Calu3 (cell line): ENCODE measurements at regions of chr12 and their contacts with region 1.

Region 1: GRCh38 chr12:98424726-98425401 is 90.5 kb upstream of the TMPO start:
- DNase-seq: peak; percentile 83
- H3K4me3 Mint-ChIP-seq: no peak overlapping the region
- H3K27ac Mint-ChIP-seq: no peak overlapping the region
- H3K4me1 Mint-ChIP-seq: peaks cover 24% of the 10 kb centered on the region
- H3K27me3 Mint-ChIP-seq: no peaks in the 10 kb centered on the region
- CTCF ChIP-seq: peak; percentile 59

Region 2: DNA sequence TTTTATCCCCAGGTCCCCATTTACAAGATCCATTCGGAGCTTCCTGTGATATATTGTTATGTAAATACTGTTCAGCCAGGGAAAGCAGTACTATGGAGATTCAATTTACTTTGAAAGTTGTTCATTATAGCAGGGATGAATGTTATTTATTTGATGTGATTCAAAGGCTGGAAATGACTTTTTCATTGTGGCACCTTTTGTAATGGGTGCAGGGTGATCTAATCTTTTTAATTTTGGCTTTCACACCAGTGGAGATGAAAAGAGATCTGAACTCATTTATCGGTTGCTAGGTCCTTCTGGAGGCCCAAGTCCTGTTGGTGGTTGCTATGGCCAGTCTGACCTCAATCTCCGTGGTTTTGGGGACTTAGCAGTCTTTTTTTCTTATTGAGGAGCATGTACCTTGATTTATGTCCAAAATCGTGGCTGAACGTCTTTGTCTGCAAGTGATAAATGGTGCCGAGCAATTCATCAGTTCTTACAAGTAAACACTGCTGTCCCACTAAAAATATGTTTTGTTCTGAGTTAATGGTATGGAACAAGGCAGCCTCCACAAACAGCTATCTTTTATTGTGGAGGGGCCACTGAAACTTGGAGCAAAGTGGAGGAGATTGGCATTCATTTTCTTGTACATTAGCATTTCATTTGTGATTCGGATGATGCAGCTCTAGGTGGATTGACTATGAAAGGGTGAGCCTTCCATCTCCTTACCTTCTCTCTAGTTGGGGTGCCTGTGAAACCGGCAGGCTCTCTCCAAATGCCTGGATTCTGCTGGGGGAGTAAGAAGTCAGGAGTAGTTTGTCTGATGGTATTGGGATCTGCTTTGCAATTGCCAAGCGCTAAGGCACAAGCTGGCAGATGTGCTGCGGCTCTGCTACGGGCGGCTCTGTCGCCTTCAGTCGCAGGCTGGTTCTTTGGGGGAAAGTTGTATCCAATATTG is 960.2 kb before region 1 on chr12:
- CTCF ChIA-PET with region 1: no interaction called
- intact Hi-C with region 1: no loop called
- DNase-seq: no peak
- H3K4me3 Mint-ChIP-seq: no peak overlapping the region
- H3K27ac Mint-ChIP-seq: no peak overlapping the region
- H3K4me1 Mint-ChIP-seq: peaks cover 13% of the 10 kb centered on the region
- H3K27me3 Mint-ChIP-seq: no peaks in the 10 kb centered on the region
- CTCF ChIP-seq: no peak

Region 3: DNA sequence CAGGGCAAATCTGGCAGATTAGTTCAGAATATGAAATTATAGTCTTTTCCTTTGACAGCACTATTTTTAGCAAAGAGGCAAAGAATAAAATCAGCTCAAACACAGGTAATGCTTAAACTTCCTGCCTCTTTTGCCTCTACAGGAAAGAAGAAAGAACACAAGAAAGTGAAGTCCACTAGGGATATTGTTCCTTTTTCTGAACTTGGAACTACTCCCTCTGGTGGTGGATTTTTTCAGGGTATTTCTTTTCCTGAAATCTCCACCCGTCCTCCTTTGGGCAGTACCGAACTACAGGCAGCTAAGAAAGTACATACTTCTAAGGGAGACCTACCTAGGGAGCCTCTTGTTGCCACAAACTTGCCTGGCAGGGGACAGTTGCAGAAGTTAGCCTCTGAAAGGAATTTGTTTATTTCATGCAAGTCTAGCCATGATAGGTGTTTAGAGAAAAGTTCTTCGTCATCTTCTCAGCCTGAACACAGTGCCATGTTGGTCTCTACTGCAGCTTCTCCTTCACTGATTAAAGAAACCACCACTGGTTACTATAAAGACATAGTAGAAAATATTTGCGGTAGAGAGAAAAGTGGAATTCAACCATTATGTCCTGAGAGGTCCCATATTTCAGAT is 107.9 kb after region 1 on chr12:
- CTCF ChIA-PET with region 1: interaction called, 3 read pairs
- intact Hi-C with region 1: loop called (anchors 1 kb)
- DNase-seq: peak; percentile 66
- H3K4me3 Mint-ChIP-seq: no peak overlapping the region
- H3K27ac Mint-ChIP-seq: no peak overlapping the region
- H3K4me1 Mint-ChIP-seq: peaks cover 5% of the 10 kb centered on the region
- H3K27me3 Mint-ChIP-seq: no peaks in the 10 kb centered on the region
- CTCF ChIP-seq: peak; percentile 63

Region 4: GRCh38 chr12:98896938-98897337 is 472.1 kb after region 1 on chr12:
- CTCF ChIA-PET with region 1: no interaction called
- intact Hi-C with region 1: no loop called
- DNase-seq: no peak
- H3K4me3 Mint-ChIP-seq: no peak overlapping the region
- H3K27ac Mint-ChIP-seq: no peak overlapping the region
- H3K4me1 Mint-ChIP-seq: no peaks in the 10 kb centered on the region
- H3K27me3 Mint-ChIP-seq: peaks cover 68% of the 10 kb centered on the region
- CTCF ChIP-seq: no peak